ENCODE measurements at regions of chr12 and their contacts with region 1.

Region 1: DNA sequence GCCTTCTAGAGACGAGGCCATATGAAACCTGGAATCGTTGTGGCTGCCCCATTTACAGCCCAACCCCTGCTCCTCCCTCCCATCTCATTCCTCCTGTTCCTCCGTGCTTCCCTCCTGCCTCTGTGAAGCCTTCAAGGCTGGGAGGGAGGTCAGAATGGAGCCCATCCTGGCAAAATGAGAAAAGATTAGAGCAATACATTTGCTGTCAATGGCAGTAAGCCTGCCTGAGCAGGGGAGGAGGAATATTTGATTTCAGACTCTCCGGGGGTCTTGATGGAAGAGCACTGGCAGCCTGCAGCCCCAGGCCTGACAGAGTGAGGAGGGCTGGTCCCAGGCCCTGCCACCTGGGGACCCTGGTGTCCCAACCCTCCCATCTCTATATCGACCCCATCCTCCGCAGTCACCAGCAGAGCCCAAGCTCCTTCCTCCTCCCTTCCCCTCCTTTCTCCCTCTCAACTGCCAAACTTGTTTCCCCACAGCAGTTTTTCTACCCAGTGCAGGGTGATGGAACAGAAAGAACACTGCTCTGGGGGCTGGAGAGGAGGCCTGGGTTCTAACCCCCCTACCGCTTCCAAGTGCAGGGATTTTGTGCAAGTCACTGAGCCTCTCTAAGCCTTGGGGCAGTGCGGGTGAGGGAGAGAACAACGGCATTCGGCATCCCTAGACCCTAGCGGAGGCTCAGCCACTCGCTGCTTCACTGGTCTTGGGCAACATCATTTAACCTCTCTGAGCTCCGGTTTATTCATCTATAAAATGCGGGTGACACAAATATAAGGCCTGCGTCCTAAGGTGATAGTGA is 16.0 kb upstream of the RACGAP1 start:
- DNase-seq: no peak
- H3K4me3 Mint-ChIP-seq: no peak overlapping the region
- H3K27ac Mint-ChIP-seq: no peak overlapping the region
- H3K4me1 Mint-ChIP-seq: peaks cover 5% of the 10 kb centered on the region
- H3K27me3 Mint-ChIP-seq: peaks cover 5% of the 10 kb centered on the region

Region 2: GRCh38 chr12:50016501-50017475 is 24.5 kb before region 1 on chr12:
- CTCF ChIA-PET with region 1: interaction called, 11 read pairs
- POLR2A ChIA-PET with region 1: no interaction called
- DNase-seq: no peak
- H3K4me3 Mint-ChIP-seq: no peak overlapping the region
- H3K27ac Mint-ChIP-seq: no peak overlapping the region
- H3K4me1 Mint-ChIP-seq: peaks cover 39% of the 10 kb centered on the region
- H3K27me3 Mint-ChIP-seq: no peaks in the 10 kb centered on the region

Region 3: GRCh38 chr12:50025187-50026059 is 15.8 kb before region 1 on chr12 and contains the start of gene RACGAP1:
- CTCF ChIA-PET with region 1: interaction called, 16 read pairs
- POLR2A ChIA-PET with region 1: no interaction called
- DNase-seq: peak; percentile 99
- H3K4me3 Mint-ChIP-seq: peak within 1 kb of the TSS; percentile 91
- H3K27ac Mint-ChIP-seq: peak within 1 kb of the TSS; percentile 98
- H3K4me1 Mint-ChIP-seq: peaks cover 43% of the 10 kb centered on the region
- H3K27me3 Mint-ChIP-seq: no peaks in the 10 kb centered on the region
- total RNA-seq, gene RACGAP1: 177 to 183 TPM

Region 4: DNA sequence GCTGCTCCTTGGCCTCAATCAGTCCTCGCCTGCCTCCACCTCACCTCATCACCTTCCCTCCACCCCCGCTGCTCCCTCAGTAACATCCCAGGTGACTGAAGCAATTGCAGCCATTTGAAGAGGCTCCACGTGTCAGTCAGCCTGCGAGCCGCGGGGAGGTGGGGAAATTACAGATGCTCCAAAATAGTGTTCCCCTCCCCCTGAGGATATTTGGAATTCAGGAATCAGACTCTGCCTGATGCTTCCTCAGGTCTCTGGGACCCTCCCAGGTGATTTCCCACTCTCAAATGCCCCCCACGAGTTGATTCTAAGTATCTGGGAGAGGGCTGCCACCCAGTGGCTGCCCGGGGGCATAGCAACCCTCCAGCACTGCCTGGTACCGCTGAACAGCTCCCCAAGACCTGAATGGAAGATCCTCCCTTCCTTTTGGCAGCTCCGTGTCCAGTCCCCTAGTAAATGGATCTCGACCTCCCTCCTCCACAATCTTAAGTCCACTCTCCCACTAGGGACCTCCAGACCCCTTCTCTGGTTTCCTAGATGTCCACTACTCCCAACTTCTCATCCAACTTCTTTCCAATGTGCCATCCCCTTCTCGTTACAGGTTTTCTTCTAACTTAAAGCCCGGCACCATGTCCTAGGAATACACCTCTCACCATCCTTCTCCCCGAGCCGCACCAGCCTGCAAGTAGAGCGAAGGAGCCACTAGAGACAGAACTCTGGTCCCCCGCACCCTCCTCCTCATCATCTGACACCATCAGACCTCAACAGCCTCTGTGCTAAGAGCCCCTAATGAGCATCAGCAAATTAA is 14.8 kb after region 1 on chr12:
- CTCF ChIA-PET with region 1: interaction called, 38 read pairs
- POLR2A ChIA-PET with region 1: no interaction called
- DNase-seq: peak; percentile 63
- H3K4me3 Mint-ChIP-seq: peak overlapping the region; percentile 28
- H3K27ac Mint-ChIP-seq: no peak overlapping the region
- H3K4me1 Mint-ChIP-seq: peaks cover 44% of the 10 kb centered on the region
- H3K27me3 Mint-ChIP-seq: peaks cover 44% of the 10 kb centered on the region

Region 5: DNA sequence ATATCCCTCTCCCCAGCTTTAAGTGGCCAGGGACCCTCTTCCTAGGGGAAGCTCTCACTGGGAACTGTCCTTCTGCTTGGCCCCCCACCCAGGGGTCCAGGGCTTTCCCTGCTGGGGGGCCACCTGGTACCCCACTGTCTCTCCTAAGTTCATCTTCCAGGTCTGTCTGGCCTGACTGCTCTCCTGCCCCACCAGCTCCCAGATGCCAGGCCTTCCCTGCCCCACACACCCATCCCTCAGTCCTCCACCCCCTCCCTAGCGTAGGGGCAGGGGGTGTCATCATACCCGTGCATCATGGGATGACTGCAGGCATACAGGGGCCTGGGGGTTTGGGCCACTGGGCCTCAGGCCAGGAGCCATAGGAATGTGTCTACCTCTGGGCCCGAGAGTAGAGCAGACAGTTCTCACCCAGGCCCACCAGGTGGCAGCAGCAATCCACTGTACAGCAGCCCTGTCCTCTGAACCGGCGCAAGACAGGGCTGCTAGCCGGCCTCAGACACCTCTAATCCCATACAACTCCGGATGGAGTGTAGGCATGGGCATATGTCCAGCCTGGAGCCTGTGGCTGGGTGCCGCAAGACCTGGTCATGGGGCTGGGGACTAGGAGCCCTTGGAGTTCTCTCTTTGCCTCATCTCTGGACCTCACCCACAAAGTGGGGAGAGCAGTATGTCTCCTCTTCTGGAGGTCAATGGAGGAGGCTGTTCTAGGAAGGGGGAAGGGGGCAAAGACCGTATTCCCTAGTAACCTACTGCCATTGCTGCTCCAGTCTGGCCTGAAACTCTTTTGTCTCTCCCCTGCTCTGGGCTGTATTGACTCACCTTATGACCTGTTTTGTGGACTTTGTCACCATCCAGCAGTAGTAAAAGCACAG is 33.9 kb after region 1 on chr12:
- CTCF ChIA-PET with region 1: interaction called, 12 read pairs
- POLR2A ChIA-PET with region 1: no interaction called
- DNase-seq: peak; percentile 83
- H3K4me3 Mint-ChIP-seq: no peak overlapping the region
- H3K27ac Mint-ChIP-seq: peak overlapping the region; percentile 52
- H3K4me1 Mint-ChIP-seq: peaks cover 7% of the 10 kb centered on the region
- H3K27me3 Mint-ChIP-seq: no peaks in the 10 kb centered on the region

Region 6: GRCh38 chr12:50151047-50151687 is 109.9 kb after region 1 on chr12:
- CTCF ChIA-PET with region 1: no interaction called
- POLR2A ChIA-PET with region 1: no interaction called
- DNase-seq: no peak
- H3K4me3 Mint-ChIP-seq: no peak overlapping the region
- H3K27ac Mint-ChIP-seq: no peak overlapping the region
- H3K4me1 Mint-ChIP-seq: peaks cover 7% of the 10 kb centered on the region
- H3K27me3 Mint-ChIP-seq: no peaks in the 10 kb centered on the region

Measured in activated CD4-positive, alpha-beta T cell treated with anti-CD3 and anti-CD28 coated beads, Interleukin-2, amount 10 ng/mL, durations not matched to agents 7 days and 5 days (primary cell).